Mammary epithelial cell (primary cell): ENCODE measurements at regions of chr7 and their contacts with region 1.

Region 1: GRCh38 chr7:64758164-64758563 is 36.1 kb upstream of the ZNF138 start:
- DNase-seq: no peak
- H3K4me3 ChIP-seq: no peak overlapping the region
- H3K27ac ChIP-seq: no peak overlapping the region
- H3K4me1 ChIP-seq: no peaks in the 10 kb centered on the region
- H3K27me3 ChIP-seq: no peaks in the 10 kb centered on the region
- CTCF ChIP-seq: no peak

Region 2: DNA sequence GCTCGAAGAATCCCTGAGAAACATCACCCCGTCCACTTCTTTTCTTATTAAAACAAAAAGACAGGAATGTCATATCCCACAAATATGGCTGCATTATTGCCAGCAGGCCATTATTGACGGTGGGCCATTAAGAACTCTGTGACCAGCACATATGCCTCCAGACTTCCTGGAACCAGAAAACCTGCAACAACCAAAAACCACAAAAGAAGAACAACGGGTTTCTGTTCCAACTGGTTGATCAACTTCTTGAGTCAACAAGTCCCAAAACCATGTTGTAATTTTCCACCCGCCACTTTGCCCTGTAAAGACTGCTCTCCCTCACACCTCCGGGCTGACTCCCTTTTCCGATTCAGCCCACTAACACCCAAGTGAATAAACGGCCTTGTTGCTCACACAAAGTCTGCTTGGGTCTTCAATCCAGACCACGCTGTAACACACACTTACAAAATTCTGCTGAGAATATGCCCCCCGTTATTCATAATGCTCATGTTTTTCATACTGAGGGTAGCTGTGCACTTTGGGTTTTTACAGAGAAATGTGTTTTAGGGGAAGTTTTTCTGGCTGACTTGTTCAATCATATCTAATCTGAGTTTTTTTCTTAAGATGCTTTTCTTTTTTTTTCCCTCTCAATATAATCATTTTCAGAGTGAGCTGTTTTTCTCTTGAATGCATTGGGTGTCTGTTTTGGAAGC is 71.5 kb before region 1 on chr7:
- CTCF ChIA-PET with region 1: no interaction called
- dilution Hi-C with region 1: loop called (anchors 5 kb)
- in situ Hi-C with region 1: no loop called
- intact Hi-C with region 1: no loop called
- DNase-seq: peak; percentile 90
- H3K4me3 ChIP-seq: no peak overlapping the region
- H3K27ac ChIP-seq: no peak overlapping the region
- H3K4me1 ChIP-seq: peaks cover 12% of the 10 kb centered on the region
- H3K27me3 ChIP-seq: no peaks in the 10 kb centered on the region
- CTCF ChIP-seq: no peak

Region 3: DNA sequence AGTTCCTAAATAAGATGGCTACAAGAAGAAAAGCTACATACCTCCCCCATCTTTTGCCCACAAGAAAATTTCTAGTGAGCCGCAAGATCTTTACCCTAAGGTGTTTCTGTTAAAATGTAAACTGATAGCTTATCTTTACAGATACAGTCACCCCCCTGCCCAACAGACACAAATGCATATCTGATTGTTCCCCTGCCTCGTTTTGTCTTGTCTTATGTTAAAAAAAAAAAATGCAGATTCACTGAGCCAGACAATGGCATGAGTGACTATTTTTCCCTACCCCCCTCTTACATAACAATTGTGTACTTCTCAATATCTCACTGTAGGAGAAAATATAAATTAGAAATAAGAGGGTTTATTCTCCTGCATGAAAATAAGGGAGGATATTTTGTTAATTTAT is 44.5 kb after region 1 on chr7:
- CTCF ChIA-PET with region 1: no interaction called
- dilution Hi-C with region 1: no loop called
- in situ Hi-C with region 1: no loop called
- intact Hi-C with region 1: no loop called
- DNase-seq: no peak
- H3K4me3 ChIP-seq: no peak overlapping the region
- H3K27ac ChIP-seq: no peak overlapping the region
- H3K4me1 ChIP-seq: no peaks in the 10 kb centered on the region
- H3K27me3 ChIP-seq: no peaks in the 10 kb centered on the region
- CTCF ChIP-seq: no peak